Naive thymus-derived CD4-positive, alpha-beta T cell (primary cell): ENCODE measurements at regions of chr21 and their contacts with region 1.

Region 1: DNA sequence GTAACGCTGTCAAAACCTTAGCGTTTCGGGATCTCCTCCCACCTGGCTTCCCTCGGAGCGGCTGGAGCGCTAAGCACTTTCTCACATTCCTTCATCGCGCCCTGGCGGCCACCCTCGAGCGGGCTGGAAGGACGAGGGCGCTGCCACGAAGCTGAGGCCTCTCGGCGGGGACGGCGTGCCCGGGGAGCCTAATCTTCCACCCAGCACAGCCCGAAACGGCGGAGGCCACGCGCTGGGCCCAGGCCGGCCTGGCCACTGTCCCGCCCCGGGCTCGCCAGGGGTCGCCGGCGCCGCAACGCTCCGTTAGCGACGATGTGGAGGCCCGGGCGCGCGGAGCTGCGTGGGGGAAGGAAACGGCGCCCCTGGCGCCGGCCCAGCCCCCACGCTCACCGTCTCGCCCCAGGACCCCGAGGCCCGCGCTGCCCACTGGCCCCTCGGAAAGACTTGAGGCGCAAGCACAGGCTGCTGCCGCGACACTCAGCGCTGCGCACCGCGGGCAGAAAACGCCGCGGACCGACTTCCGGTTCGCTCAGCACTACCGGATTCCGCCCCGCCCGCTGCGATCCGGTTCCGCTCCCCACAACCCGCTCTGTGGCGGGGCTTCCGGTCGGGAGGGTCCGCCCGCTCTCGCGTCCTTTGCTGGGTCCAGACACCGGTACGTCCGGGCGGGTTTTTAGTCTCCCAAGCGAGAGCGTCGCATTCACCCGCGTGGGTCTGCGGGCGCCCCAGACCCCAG is at the start of gene YBEY:
- DNase-seq: peak; percentile 70 to 91 (median 80)
- ATAC-seq: peak; percentile 95
- H3K4me3 ChIP-seq: peak within 1 kb of the TSS; percentile 58
- H3K4me3 Mint-ChIP-seq: peak within 1 kb of the TSS; percentile 89 to 99 (median 98)
- H3K27ac ChIP-seq: peak within 1 kb of the TSS; percentile 86
- H3K27ac Mint-ChIP-seq: peak within 1 kb of the TSS; percentile 92 to 98 (median 97)
- H3K4me1 ChIP-seq: peaks cover 27 to 31% of the 10 kb centered on the region in 2 donors
- H3K4me1 Mint-ChIP-seq: peaks cover 21 to 76% (median 62%) of the 10 kb centered on the region in 7 donors
- H3K27me3 ChIP-seq: no peaks in the 10 kb centered on the region
- H3K27me3 Mint-ChIP-seq: no peaks in the 10 kb centered on the region
- total RNA-seq, gene YBEY: 8.8 to 16.7 (median 15.6) TPM

Region 2: DNA sequence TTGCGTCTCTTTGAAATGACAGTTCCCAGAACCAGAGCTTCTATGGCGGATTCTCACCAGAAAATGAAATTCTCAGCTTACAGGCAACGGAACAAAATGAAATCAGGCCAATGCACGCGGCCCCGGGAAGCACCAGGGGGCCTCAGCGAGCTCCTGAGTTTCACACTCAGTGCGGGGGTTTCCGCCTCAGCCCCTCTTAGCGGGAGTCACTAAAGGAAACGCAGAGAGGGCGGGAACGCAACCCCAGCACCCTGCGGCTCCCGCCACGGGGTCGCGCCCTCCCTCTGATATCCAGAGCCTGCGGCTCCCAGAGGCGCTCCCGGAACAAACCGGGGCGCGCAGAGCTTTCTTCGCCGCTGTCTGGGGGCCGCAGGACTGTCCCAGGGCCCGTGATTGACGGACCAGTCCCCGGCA is 312.3 kb before region 1 on chr21:
- CTCF ChIA-PET with region 1: no interaction called
- POLR2A ChIA-PET with region 1: no interaction called
- intact Hi-C with region 1: loop called in 1 of 2 experiments (anchors 10 kb)
- DNase-seq: peak; percentile 59 to 84 (median 77)
- ATAC-seq: peak; percentile 94
- H3K4me3 ChIP-seq: peak overlapping the region; percentile 78
- H3K4me3 Mint-ChIP-seq: peak overlapping the region; percentile 75 to 94 (median 92)
- H3K27ac ChIP-seq: peak overlapping the region; percentile 50
- H3K27ac Mint-ChIP-seq: peak overlapping the region in 8 of 9 donors; percentile 41 to 91 (median 80)
- H3K4me1 ChIP-seq: peaks cover 20 to 22% of the 10 kb centered on the region in 2 donors
- H3K4me1 Mint-ChIP-seq: peaks cover 5 to 28% (median 18%) of the 10 kb centered on the region in 7 donors
- H3K27me3 ChIP-seq: peaks cover 0 to 13% of the 10 kb centered on the region in 2 donors
- H3K27me3 Mint-ChIP-seq: peaks cover 0 to 44% (median 10%) of the 10 kb centered on the region in 5 donors

Region 3: GRCh38 chr21:46253610-46254124 is 32.3 kb before region 1 on chr21:
- CTCF ChIA-PET with region 1: no interaction called
- POLR2A ChIA-PET with region 1: no interaction called
- intact Hi-C with region 1: loop called in 1 of 2 experiments (anchors 5 kb)
- DNase-seq: peak in 8 of 9 donors; percentile 9 to 66 (median 37)
- ATAC-seq: peak; percentile 91
- H3K4me3 ChIP-seq: no peak overlapping the region
- H3K4me3 Mint-ChIP-seq: peak overlapping the region; percentile 36 to 72 (median 48)
- H3K27ac ChIP-seq: peak overlapping the region; percentile 22
- H3K27ac Mint-ChIP-seq: peak overlapping the region; percentile 56 to 92 (median 88)
- H3K4me1 ChIP-seq: peaks cover 11 to 14% of the 10 kb centered on the region in 2 donors
- H3K4me1 Mint-ChIP-seq: peaks cover 25 to 41% (median 40%) of the 10 kb centered on the region in 7 donors
- H3K27me3 ChIP-seq: no peaks in the 10 kb centered on the region
- H3K27me3 Mint-ChIP-seq: no peaks in the 10 kb centered on the region

Region 4: DNA sequence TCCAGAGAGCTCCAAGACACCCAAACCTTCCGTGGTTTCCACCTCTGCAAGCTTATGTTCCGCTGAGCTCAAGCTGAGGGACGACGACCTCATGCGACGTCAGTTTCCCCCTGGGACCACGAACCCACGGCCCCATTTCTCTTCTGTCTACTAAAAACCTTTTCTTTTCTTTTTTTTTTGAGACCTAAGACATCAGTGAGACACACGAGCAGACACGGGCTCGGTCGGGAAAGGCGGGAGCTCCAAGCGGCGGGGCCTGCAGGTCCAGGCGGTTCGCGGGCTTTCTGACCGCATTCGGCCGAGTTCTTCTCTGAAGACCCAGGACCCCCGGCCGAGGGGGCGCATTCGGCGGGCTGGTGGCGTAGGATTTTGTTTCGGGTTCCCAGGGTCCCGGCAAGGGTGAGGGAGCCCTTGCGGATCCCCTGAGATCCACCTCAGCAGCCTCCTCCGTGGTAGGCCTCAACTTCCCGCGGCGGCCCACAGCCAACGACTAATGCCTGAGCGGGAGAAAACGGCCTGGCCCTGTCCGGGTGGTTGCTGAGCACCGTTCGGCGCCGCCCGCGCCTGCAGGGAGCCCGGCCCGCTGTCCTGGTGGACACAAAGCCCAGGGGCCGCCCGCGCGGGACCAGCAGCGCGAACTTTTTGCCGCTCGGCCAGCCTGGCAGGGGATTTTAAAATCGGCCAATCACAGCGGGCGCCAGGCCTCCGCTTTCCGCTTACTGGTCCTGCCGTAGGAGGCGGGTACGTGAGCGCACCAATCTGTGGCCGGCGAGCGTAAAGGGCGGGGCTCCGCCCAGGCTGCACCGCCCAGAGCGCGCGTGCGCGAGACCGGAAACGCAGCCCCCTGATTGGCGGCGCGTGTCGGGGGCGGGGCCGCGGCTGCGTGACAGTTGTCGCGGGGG is 37.5 kb after region 1 on chr21 and contains the start of gene C21orf58:
- CTCF ChIA-PET with region 1: interaction called, 6 read pairs
- POLR2A ChIA-PET with region 1: interaction called, 4 read pairs
- intact Hi-C with region 1: loop called (anchors 1 kb)
- DNase-seq: peak; percentile 96 to 99 (median 98)
- ATAC-seq: peak; percentile 90
- H3K4me3 ChIP-seq: peak within 1 kb of the TSS; percentile 98
- H3K4me3 Mint-ChIP-seq: peak within 1 kb of the TSS; percentile 90 to 98 (median 96)
- H3K27ac ChIP-seq: peak within 1 kb of the TSS; percentile 97
- H3K27ac Mint-ChIP-seq: peak within 1 kb of the TSS; percentile 91 to 99 (median 97)
- H3K4me1 ChIP-seq: peaks cover 0 to 16% of the 10 kb centered on the region in 2 donors
- H3K4me1 Mint-ChIP-seq: peaks cover 14 to 44% (median 33%) of the 10 kb centered on the region in 7 donors
- H3K27me3 ChIP-seq: no peaks in the 10 kb centered on the region
- H3K27me3 Mint-ChIP-seq: no peaks in the 10 kb centered on the region
- total RNA-seq, gene C21orf58: 5.0 to 38.4 (median 9.0) TPM

Region 5: GRCh38 chr21:46458315-46459023 is 172.5 kb after region 1 on chr21 and contains the start of gene DIP2A:
- CTCF ChIA-PET with region 1: no interaction called
- POLR2A ChIA-PET with region 1: no interaction called
- intact Hi-C with region 1: loop called (anchors 1 to 5 kb)
- DNase-seq: peak; percentile 93 to 97 (median 96)
- ATAC-seq: peak; percentile 98
- H3K4me3 ChIP-seq: peak within 1 kb of the TSS; percentile 81
- H3K4me3 Mint-ChIP-seq: peak within 1 kb of the TSS; percentile 86 to 96 (median 92)
- H3K27ac ChIP-seq: peak within 1 kb of the TSS; percentile 94
- H3K27ac Mint-ChIP-seq: peak within 1 kb of the TSS; percentile 85 to 97 (median 91)
- H3K4me1 ChIP-seq: peaks cover 4 to 17% of the 10 kb centered on the region in 2 donors
- H3K4me1 Mint-ChIP-seq: peaks cover 28 to 62% (median 48%) of the 10 kb centered on the region in 7 donors
- H3K27me3 ChIP-seq: no peaks in the 10 kb centered on the region
- H3K27me3 Mint-ChIP-seq: no peaks in the 10 kb centered on the region
- total RNA-seq, gene DIP2A: 54.7 to 118 (median 108) TPM